ENCODE measurements at regions of chr13 and their contacts with region 1.

Region 1: GRCh38 chr13:20495082-20496023 is 30.3 kb downstream of the CRYL1 start:
- DNase-seq: peak; percentile 31 to 42
- ATAC-seq: peak; percentile 85 to 87
- H3K4me3 ChIP-seq: peak overlapping the region in 3 of 4 donors; percentile 14 to 31 (median 16)
- H3K27ac ChIP-seq: peak overlapping the region in 3 of 4 donors; percentile 25 to 47 (median 27)
- H3K4me1 ChIP-seq: no peaks in the 10 kb centered on the region
- H3K27me3 ChIP-seq: no peaks in the 10 kb centered on the region
- CTCF ChIP-seq: peak; percentile 83 to 95 (median 92)
- POLR2A ChIP-seq: no peak

Region 2: DNA sequence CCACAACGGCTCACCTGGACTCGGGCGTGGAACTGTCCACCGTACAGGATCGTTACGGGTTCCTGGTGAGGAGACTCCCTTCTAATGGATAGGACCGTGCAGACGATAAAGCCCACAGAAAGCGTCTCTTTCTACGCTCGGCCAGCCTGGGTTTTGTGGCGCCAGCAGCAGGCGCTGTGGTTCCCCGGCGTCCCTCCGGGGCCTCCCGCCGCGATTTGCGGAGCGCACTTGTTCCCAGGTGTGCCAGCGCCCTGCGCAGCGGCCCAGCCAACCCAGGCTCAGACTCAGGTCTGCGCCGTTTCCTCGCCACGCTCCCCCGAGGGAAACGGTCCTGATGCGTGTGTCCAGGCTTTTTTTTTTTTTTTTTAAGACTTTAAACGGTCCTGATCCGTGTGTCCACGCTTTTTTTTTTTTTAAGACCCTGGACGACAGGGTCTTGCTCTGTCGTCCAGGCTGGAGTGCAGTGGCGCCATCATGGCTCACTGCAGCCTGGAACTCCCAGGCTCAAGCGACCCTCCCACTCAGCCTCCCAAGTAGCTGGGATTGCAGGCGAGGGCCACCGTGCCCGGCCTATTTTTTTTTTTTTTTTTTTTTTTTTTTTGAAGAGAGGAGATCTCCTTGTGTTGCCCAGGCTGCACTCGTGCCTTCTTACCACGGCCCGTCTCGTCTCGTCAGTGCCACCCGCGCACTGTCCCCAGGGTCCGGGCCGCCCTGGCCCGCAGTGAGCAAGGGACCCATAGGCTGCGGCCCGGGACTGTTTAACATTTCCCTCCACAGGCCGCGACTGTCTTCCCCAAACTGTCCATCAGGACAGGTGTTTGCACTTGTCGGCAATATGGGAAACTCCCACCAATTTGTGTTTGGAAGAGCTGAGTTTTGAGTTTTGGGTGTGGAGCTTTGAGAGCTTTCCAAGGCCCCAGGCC is 358.3 kb before region 1 on chr13:
- in situ Hi-C with region 1: no loop called
- intact Hi-C with region 1: no loop called
- DNase-seq: no peak
- ATAC-seq: no peak
- H3K4me3 ChIP-seq: peak overlapping the region in 1 of 4 donors; percentile 4
- H3K27ac ChIP-seq: no peak overlapping the region
- H3K4me1 ChIP-seq: peaks cover 13 to 17% of the 10 kb centered on the region in 2 donors
- H3K27me3 ChIP-seq: peaks cover 2 to 17% (median 2%) of the 10 kb centered on the region in 3 donors
- CTCF ChIP-seq: no peak
- POLR2A ChIP-seq: no peak

Region 3: DNA sequence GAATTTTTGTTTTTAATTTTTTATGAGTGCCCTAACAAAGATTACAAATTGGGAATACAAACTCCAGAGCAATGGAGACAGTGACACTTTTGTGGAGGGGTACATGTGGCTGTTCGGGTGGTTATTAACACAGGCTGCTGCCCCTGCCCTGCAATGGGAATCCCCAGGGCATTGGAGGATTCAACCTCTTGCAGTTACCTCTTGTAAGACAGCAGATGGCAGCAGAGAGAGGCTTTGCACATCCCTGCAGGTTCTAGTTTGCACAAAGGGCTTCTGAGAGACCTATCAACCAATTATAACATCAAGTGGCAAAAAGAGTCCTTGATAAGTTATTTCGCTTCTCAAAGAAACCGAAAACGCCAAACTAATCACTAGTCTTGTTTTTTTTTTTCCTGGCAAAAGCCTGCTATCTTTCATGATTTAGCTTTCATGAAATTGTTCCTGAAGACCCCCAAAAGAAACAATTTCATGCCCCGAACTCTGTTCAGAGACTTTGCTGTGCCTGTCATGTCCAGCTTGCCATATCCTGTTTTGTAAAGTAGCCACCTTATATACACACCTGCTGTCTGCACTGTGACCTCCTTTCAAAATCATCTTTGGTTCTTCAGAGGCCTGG is 313.0 kb before region 1 on chr13:
- in situ Hi-C with region 1: loop called in 2 of 4 experiments (anchors 25 kb)
- intact Hi-C with region 1: no loop called
- DNase-seq: no peak
- ATAC-seq: peak; percentile 80 to 83
- H3K4me3 ChIP-seq: no peak overlapping the region
- H3K27ac ChIP-seq: no peak overlapping the region
- H3K4me1 ChIP-seq: no peaks in the 10 kb centered on the region
- H3K27me3 ChIP-seq: peaks cover 9 to 11% (median 11%) of the 10 kb centered on the region in 3 donors
- CTCF ChIP-seq: peak; percentile 20 to 76 (median 48)
- POLR2A ChIP-seq: no peak

Region 4: DNA sequence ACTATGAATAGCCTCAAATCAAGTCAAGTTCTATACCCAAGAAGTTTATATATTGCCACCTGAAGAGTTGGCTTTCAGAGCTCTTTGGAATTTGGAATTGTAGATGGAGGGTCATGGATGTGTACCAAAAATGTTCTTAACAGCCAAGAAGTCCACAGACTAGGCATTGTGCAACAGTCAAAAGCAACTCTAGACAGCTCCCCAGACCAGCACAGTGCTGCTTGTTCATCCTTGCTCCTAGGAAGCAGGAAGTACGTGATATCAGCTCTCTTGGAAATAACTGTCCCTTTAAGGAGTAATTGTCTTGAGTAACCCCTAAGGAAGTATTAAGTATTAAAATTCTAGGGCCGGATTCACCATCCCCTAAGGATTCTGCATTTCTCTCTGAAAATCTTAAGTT is 177.4 kb after region 1 on chr13:
- in situ Hi-C with region 1: loop called in 1 of 4 experiments (anchors 25 kb)
- intact Hi-C with region 1: no loop called
- DNase-seq: no peak
- ATAC-seq: no peak
- H3K4me3 ChIP-seq: no peak overlapping the region
- H3K27ac ChIP-seq: no peak overlapping the region
- H3K4me1 ChIP-seq: no peaks in the 10 kb centered on the region
- H3K27me3 ChIP-seq: no peaks in the 10 kb centered on the region
- CTCF ChIP-seq: no peak
- POLR2A ChIP-seq: no peak

Region 5: GRCh38 chr13:20828539-20829364 is 333.4 kb after region 1 on chr13:
- in situ Hi-C with region 1: loop called in 2 of 4 experiments (anchors 10 kb)
- intact Hi-C with region 1: loop called (anchors 5 kb)
- DNase-seq: no peak
- ATAC-seq: peak; percentile 33 to 50
- H3K4me3 ChIP-seq: peak overlapping the region; percentile 35 to 63 (median 49)
- H3K27ac ChIP-seq: peak overlapping the region; percentile 87 to 93 (median 88)
- H3K4me1 ChIP-seq: peaks cover 73 to 79% of the 10 kb centered on the region in 2 donors
- H3K27me3 ChIP-seq: no peaks in the 10 kb centered on the region
- CTCF ChIP-seq: peak; percentile 78 to 85 (median 84)
- POLR2A ChIP-seq: no peak

Region 6: GRCh38 chr13:20924758-20925394 is 429.5 kb after region 1 on chr13:
- in situ Hi-C with region 1: loop called (anchors 5 to 10 kb)
- intact Hi-C with region 1: loop called (anchors 2 kb)
- DNase-seq: peak; percentile 36 to 57
- ATAC-seq: peak in 1 of 2 donors; percentile 68
- H3K4me3 ChIP-seq: no peak overlapping the region
- H3K27ac ChIP-seq: no peak overlapping the region
- H3K4me1 ChIP-seq: no peaks in the 10 kb centered on the region
- H3K27me3 ChIP-seq: no peaks in the 10 kb centered on the region
- CTCF ChIP-seq: peak; percentile 43 to 84 (median 64)
- POLR2A ChIP-seq: no peak